Endothelial cell of umbilical vein (primary cell): ENCODE measurements at regions of chr19 and their contacts with region 1.

Region 1: DNA sequence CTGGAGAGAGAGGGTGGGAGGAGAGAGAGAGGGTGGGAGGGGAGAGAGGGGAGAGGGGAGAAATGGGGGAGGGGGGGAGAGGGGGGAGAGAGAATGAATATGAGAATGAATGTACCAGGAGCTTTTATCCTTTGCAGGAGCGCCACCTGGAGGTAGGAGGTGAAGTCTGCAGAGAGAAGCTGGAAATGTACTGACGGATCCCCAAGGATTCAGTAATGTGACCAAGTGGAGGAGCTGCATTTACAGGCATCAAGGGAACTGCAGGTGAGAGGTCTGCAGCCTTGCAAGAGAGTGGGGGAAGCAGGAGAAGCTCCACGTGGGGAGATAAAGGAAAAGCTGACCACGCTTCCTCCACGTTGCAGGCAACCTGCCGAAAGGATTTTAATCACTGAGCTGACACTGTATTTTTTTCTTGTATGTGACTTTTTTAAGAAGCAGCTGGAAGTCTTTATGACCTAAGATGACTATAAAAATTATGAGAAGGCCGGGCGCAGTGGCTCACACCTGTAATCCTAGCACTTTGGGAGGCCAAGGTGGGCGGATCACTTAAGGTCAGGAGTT is 33.7 kb downstream of the VSTM1 start:
- DNase-seq: peak; percentile 67
- H3K4me3 ChIP-seq: no peak overlapping the region
- H3K27ac ChIP-seq: no peak overlapping the region
- H3K4me1 ChIP-seq: peaks cover 4% of the 10 kb centered on the region
- H3K27me3 ChIP-seq: no peaks in the 10 kb centered on the region
- CTCF ChIP-seq: peak; percentile 61 to 72
- POLR2A ChIP-seq: no peak

Region 2: GRCh38 chr19:53772943-53773342 is 257.1 kb before region 1 on chr19:
- CTCF ChIA-PET with region 1: interaction called, 10 read pairs
- POLR2A ChIA-PET with region 1: no interaction called
- dilution Hi-C with region 1: no loop called
- intact Hi-C with region 1: loop called (anchors 1 kb)
- DNase-seq: peak; percentile 66
- H3K4me3 ChIP-seq: no peak overlapping the region
- H3K27ac ChIP-seq: no peak overlapping the region
- H3K4me1 ChIP-seq: no peaks in the 10 kb centered on the region
- H3K27me3 ChIP-seq: no peaks in the 10 kb centered on the region
- CTCF ChIP-seq: peak; percentile 51 to 65
- POLR2A ChIP-seq: no peak

Region 3: GRCh38 chr19:53828531-53828930 is 201.5 kb before region 1 on chr19:
- CTCF ChIA-PET with region 1: interaction called, 14 read pairs
- POLR2A ChIA-PET with region 1: no interaction called
- dilution Hi-C with region 1: no loop called
- intact Hi-C with region 1: no loop called
- DNase-seq: peak; percentile 47
- H3K4me3 ChIP-seq: no peak overlapping the region
- H3K27ac ChIP-seq: no peak overlapping the region
- H3K4me1 ChIP-seq: peaks cover 5% of the 10 kb centered on the region
- H3K27me3 ChIP-seq: no peaks in the 10 kb centered on the region
- CTCF ChIP-seq: no peak
- POLR2A ChIP-seq: no peak

Region 4: GRCh38 chr19:53879140-53880081 is 150.6 kb before region 1 on chr19:
- CTCF ChIA-PET with region 1: interaction called, 17 read pairs
- POLR2A ChIA-PET with region 1: no interaction called
- dilution Hi-C with region 1: no loop called
- intact Hi-C with region 1: no loop called
- DNase-seq: peak; percentile 91
- H3K4me3 ChIP-seq: peak overlapping the region; percentile 36 to 75 (median 56)
- H3K27ac ChIP-seq: no peak overlapping the region
- H3K4me1 ChIP-seq: peaks cover 17% of the 10 kb centered on the region
- H3K27me3 ChIP-seq: peaks cover 33 to 37% of the 10 kb centered on the region in 2 experiments
- CTCF ChIP-seq: no peak
- POLR2A ChIP-seq: peak; percentile 44

Region 5: DNA sequence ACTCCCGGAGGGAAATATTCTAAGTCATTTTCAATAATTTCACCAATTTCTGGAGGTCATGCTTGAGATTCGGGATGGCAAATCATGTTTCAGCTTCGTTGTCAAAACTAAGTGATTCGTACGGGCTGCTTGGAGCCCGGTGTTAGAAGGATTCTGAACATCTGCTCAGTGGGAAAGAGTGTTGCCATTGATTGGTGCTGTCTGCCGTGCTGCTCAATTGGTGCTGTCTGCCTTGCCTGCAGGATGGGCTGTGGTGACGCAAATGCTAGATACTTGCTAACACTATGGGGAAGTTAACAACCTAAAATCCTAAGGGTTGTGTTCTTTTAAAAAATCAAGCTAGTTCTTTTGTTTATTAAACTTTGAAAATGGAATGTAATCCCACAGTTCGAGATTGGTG is 84.6 kb before region 1 on chr19:
- CTCF ChIA-PET with region 1: interaction called, 11 read pairs
- POLR2A ChIA-PET with region 1: no interaction called
- dilution Hi-C with region 1: no loop called
- intact Hi-C with region 1: no loop called
- DNase-seq: no peak
- H3K4me3 ChIP-seq: no peak overlapping the region
- H3K27ac ChIP-seq: no peak overlapping the region
- H3K4me1 ChIP-seq: no peaks in the 10 kb centered on the region
- H3K27me3 ChIP-seq: peaks cover 11 to 30% of the 10 kb centered on the region in 2 experiments
- CTCF ChIP-seq: no peak
- POLR2A ChIP-seq: no peak

Region 6: GRCh38 chr19:54011507-54012211 is 18.4 kb before region 1 on chr19:
- CTCF ChIA-PET with region 1: interaction called, 21 read pairs
- POLR2A ChIA-PET with region 1: no interaction called
- dilution Hi-C with region 1: no loop called
- intact Hi-C with region 1: no loop called
- DNase-seq: no peak
- H3K4me3 ChIP-seq: no peak overlapping the region
- H3K27ac ChIP-seq: no peak overlapping the region
- H3K4me1 ChIP-seq: peaks cover 18% of the 10 kb centered on the region
- H3K27me3 ChIP-seq: no peaks in the 10 kb centered on the region
- CTCF ChIP-seq: no peak
- POLR2A ChIP-seq: no peak

Region 7: DNA sequence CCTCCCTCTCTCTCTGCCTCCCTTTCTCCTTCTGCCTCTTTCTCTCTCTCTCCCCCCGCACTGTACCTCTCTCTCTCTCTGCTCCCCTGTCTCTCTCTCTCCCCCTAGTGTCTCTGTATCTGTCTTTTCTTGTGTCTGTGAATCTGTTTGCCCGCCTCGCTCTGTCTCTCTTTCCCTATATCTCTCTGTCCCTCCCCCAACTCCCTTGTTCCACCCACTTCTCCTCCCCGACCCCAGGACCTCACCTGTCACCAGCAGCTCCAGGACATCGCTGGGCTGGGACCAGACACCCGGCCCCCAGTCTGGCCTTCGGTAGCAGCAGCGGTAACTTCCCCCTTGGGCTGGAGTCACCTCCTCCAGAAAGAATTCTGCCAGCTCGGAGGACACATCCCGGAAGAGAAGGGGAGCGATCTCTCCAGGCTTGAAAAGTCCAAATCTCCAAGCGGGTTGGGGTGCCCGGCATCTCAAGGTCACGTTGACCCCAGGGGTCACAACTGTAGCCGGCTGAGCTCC is 66.7 kb after region 1 on chr19:
- CTCF ChIA-PET with region 1: interaction called, 27 read pairs
- POLR2A ChIA-PET with region 1: no interaction called
- dilution Hi-C with region 1: no loop called
- intact Hi-C with region 1: no loop called
- DNase-seq: no peak
- H3K4me3 ChIP-seq: no peak overlapping the region
- H3K27ac ChIP-seq: no peak overlapping the region
- H3K4me1 ChIP-seq: no peaks in the 10 kb centered on the region
- H3K27me3 ChIP-seq: no peaks in the 10 kb centered on the region
- CTCF ChIP-seq: peak in 1 of 2 donors; percentile 15
- POLR2A ChIP-seq: no peak